Body of pancreas (tissue), 4 donors: ENCODE measurements at regions of chr19 and their contacts with region 1.

Region 1: DNA sequence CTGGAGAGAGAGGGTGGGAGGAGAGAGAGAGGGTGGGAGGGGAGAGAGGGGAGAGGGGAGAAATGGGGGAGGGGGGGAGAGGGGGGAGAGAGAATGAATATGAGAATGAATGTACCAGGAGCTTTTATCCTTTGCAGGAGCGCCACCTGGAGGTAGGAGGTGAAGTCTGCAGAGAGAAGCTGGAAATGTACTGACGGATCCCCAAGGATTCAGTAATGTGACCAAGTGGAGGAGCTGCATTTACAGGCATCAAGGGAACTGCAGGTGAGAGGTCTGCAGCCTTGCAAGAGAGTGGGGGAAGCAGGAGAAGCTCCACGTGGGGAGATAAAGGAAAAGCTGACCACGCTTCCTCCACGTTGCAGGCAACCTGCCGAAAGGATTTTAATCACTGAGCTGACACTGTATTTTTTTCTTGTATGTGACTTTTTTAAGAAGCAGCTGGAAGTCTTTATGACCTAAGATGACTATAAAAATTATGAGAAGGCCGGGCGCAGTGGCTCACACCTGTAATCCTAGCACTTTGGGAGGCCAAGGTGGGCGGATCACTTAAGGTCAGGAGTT is 33.7 kb downstream of the VSTM1 start:
- DNase-seq: peak; percentile 45 to 62 (median 55)
- ATAC-seq: no peak
- H3K4me3 ChIP-seq: no peak overlapping the region
- H3K27ac ChIP-seq: no peak overlapping the region
- H3K4me1 ChIP-seq: no peaks in the 10 kb centered on the region
- H3K27me3 ChIP-seq: no peaks in the 10 kb centered on the region
- CTCF ChIP-seq: peak; percentile 15 to 49 (median 46)
- POLR2A ChIP-seq: no peak

Region 2: DNA sequence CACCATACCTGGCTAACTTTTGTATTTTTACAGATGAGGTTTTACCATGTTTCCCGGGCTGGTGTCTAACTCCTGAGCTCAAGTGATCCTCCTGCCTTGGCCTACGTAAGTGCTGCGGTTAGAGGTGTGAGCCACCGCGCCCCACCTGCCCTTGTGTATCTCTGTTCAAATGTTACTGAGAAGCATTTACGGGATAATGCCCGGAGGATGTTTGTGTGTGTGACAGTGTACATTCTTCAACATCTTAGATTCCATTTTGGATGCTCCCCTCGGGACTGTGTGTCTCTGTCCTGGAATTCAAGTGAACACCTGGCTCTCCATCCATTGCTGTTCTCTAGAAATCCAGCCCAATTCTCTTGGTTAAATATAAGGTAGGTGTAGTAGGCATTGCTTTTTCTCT is 299.6 kb before region 1 on chr19:
- intact Hi-C with region 1: no loop called
- DNase-seq: no peak
- ATAC-seq: no peak
- H3K4me3 ChIP-seq: no peak overlapping the region
- H3K27ac ChIP-seq: no peak overlapping the region
- H3K4me1 ChIP-seq: no peaks in the 10 kb centered on the region
- H3K27me3 ChIP-seq: no peaks in the 10 kb centered on the region
- CTCF ChIP-seq: no peak
- POLR2A ChIP-seq: no peak

Region 3: GRCh38 chr19:53792721-53793433 is 237.1 kb before region 1 on chr19:
- intact Hi-C with region 1: loop called (anchors 10 kb)
- DNase-seq: peak; percentile 84 to 89 (median 86)
- ATAC-seq: peak; percentile 94
- H3K4me3 ChIP-seq: no peak overlapping the region
- H3K27ac ChIP-seq: no peak overlapping the region
- H3K4me1 ChIP-seq: no peaks in the 10 kb centered on the region
- H3K27me3 ChIP-seq: no peaks in the 10 kb centered on the region
- CTCF ChIP-seq: peak; percentile 93 to 99 (median 99)
- POLR2A ChIP-seq: no peak

Region 4: DNA sequence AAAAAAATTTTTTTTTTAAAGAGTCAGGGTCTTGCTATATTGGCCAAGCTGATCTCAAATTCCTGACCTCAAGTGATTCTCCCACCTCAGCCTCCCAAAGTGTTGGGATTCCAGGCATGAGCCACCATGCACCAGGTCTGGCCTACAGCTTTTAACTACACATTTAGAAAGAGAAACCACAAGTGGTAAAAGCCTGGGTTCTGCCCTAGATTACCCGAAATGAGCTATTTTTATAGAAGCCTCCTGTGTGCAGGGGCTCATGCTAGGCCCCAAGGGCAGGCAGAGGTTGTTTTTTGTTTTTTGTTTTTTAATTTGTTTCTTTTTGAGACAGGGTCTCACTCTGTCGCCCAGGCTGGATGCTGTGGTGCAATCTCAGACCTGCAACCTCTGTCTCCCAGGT is 176.3 kb before region 1 on chr19:
- intact Hi-C with region 1: loop called (anchors 10 kb)
- DNase-seq: no peak
- ATAC-seq: no peak
- H3K4me3 ChIP-seq: no peak overlapping the region
- H3K27ac ChIP-seq: no peak overlapping the region
- H3K4me1 ChIP-seq: no peaks in the 10 kb centered on the region
- H3K27me3 ChIP-seq: no peaks in the 10 kb centered on the region
- CTCF ChIP-seq: no peak
- POLR2A ChIP-seq: no peak

Region 5: DNA sequence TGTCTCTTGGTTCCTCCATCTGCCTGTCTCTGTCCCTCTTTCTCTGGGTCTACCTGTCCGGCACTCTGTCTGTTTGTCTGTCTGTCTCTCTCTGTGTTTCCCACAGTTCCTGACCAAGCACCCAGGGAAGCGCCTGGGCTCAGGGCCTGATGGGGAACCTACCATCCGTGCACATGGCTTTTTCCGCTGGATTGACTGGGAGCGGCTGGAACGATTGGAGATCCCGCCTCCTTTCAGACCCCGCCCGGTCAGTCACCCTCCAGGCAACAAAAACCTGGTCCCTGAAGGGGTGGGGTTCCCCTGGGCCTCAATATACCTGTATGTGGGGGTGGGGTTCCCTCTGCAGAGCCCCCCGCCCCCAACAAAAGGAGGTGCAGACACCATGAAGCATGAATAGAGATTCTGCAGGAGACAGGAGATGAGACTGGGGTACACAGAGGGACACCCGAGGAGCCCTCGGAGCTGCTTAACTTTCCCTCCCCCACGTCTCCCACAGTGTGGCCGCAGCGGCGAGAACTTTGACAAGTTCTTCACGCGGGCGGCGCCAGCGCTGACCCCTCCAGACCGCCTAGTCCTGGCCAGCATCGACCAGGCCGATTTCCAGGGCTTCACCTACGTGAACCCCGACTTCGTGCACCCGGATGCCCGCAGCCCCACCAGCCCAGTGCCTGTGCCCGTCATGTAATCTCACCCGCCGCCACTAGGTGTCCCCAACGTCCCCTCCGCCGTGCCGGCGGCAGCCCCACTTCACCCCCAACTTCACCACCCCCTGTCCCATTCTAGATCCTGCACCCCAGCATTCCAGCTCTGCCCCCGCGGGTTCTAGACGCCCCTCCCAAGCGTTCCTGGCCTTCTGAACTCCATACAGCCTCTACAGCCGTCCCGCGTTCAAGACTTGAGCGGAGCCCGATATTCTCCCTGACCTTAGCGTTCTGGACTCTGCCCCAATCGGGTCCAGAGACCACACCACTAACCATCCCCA is 123.5 kb before region 1 on chr19:
- intact Hi-C with region 1: no loop called
- DNase-seq: peak; percentile 19 to 48 (median 36)
- ATAC-seq: no peak
- H3K4me3 ChIP-seq: no peak overlapping the region
- H3K27ac ChIP-seq: no peak overlapping the region
- H3K4me1 ChIP-seq: peaks cover 9% of the 10 kb centered on the region
- H3K27me3 ChIP-seq: peaks cover 0 to 46% of the 10 kb centered on the region in 2 donors
- CTCF ChIP-seq: peak; percentile 43 to 77 (median 67)
- POLR2A ChIP-seq: no peak

Region 6: GRCh38 chr19:54077334-54077733 is 47.3 kb after region 1 on chr19:
- intact Hi-C with region 1: no loop called
- DNase-seq: no peak
- ATAC-seq: no peak
- H3K4me3 ChIP-seq: no peak overlapping the region
- H3K27ac ChIP-seq: no peak overlapping the region
- H3K4me1 ChIP-seq: no peaks in the 10 kb centered on the region
- H3K27me3 ChIP-seq: no peaks in the 10 kb centered on the region
- CTCF ChIP-seq: no peak
- POLR2A ChIP-seq: no peak

Region 7: GRCh38 chr19:54209811-54210494 is 179.9 kb after region 1 on chr19:
- intact Hi-C with region 1: no loop called
- DNase-seq: peak; percentile 97 to 99 (median 98)
- ATAC-seq: peak; percentile 88
- H3K4me3 ChIP-seq: no peak overlapping the region
- H3K27ac ChIP-seq: peak overlapping the region; percentile 94 to 97 (median 96)
- H3K4me1 ChIP-seq: peaks cover 65% of the 10 kb centered on the region
- H3K27me3 ChIP-seq: no peaks in the 10 kb centered on the region
- CTCF ChIP-seq: peak in 1 of 7 experiments; percentile 4
- POLR2A ChIP-seq: peak; percentile 70 to 83 (median 81)